Activated naive CD4-positive, alpha-beta T cell treated with anti-CD3 and anti-CD28 coated beads for 36 hours (primary cell): ENCODE measurements at regions of chr9 and their contacts with region 1.

Region 1: DNA sequence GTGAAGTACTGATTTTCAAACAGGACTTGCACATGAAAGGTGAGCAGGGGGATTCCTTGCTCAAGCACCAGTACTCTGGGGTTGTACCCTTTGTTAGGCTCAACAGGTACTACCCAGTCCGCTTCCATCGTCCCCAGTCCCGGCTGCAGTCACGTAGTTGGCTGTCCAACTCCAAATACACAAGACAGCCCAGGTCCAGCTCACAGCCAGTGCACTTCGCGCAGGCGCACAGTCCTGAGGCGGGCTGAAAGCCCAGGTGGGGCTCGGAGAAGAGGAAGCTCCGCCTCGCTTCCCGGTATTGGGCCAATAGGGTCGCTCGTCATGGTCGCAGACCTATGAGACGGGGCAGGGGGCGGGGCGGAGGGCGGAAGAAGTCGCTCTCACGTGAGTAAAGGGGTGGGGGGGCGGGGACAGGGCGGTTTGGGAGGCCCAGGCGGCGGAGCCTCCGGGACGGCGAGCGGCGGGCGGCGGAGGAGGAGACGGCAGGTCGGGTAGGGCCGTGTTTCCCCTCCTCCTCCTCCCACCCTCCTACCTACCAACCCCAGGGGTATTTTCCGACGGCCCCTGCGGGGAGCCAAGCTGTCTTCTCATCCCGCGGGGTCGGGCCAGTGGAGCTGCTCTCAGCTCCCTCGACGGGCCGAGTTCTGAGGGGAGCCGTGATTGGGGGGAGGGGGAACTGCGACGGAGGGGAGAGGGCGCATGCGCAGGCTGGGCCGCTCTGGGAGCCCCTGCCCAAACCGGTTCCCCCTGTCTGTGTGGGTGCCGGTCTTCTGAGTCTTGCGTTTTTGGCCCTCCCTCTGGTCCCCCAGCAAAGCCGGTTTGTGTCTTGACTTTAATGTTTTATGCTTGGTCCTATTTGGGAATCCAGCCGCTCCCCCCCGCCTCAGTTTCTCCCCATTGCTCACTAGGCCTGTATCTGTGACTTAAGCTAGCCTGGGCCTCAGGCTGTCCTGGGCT is at the start of gene RABGAP1:
- DNase-seq: peak; percentile 99
- H3K4me3 Mint-ChIP-seq: peak within 1 kb of the TSS; percentile 96
- H3K27ac Mint-ChIP-seq: peak within 1 kb of the TSS; percentile 83
- H3K4me1 Mint-ChIP-seq: peaks cover 37% of the 10 kb centered on the region
- H3K27me3 Mint-ChIP-seq: no peaks in the 10 kb centered on the region
- total RNA-seq, gene RABGAP1: 19.7 to 21.3 TPM

Region 2: GRCh38 chr9:122912964-122913673 is 27.8 kb before region 1 on chr9 and contains the start of gene ZBTB6:
- CTCF ChIA-PET with region 1: no interaction called
- intact Hi-C with region 1: loop called (anchors 1 kb)
- DNase-seq: peak; percentile 86
- H3K4me3 Mint-ChIP-seq: peak within 1 kb of the TSS; percentile 96
- H3K27ac Mint-ChIP-seq: peak within 1 kb of the TSS; percentile 92
- H3K4me1 Mint-ChIP-seq: peaks cover 26% of the 10 kb centered on the region
- H3K27me3 Mint-ChIP-seq: no peaks in the 10 kb centered on the region
- total RNA-seq, gene ZBTB6: 7.7 to 8.0 TPM

Region 3: DNA sequence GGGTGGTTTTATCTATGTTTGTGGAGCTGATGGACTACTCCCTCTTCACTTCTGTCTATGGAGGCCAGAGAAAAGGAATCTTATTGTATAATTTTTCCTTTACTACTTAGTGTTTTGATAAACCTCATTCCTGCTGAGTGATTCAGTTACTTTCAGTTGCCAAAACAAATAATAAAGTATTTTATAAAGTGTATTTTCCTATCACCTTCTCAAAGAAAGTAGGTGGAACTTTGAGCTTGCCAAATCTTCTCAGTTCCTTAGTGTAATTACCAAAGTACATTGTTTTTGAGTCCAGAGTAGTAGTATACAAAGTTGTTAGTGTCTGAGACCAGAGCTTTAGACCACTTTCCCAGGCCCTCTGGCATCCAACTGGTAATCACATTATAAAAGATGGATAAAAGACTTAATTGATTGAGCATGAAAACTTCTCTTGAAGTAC is 13.4 kb after region 1 on chr9:
- CTCF ChIA-PET with region 1: no interaction called
- intact Hi-C with region 1: no loop called
- DNase-seq: no peak
- H3K4me3 Mint-ChIP-seq: no peak overlapping the region
- H3K27ac Mint-ChIP-seq: no peak overlapping the region
- H3K4me1 Mint-ChIP-seq: peaks cover 19% of the 10 kb centered on the region
- H3K27me3 Mint-ChIP-seq: no peaks in the 10 kb centered on the region

Region 4: DNA sequence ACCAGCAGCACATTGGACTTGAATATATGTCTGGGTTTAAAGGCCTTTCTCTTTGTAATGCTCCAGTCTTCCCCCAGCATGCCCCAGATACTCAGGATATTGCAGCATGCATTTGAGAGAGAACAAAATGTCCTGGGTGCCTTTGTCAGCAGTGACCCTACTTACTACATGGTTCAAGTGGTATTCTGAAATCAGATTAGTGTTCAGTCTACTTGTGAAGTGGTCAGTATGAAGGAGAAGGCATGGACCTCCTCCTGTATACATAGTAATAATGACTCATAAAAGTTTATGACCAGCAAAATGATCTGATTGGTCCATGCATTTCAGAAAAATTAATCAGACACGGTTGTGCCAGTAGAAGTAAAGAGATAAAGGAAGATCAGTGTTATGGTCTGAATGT is 118.0 kb after region 1 on chr9:
- CTCF ChIA-PET with region 1: no interaction called
- intact Hi-C with region 1: no loop called
- DNase-seq: no peak
- H3K4me3 Mint-ChIP-seq: no peak overlapping the region
- H3K27ac Mint-ChIP-seq: no peak overlapping the region
- H3K4me1 Mint-ChIP-seq: no peaks in the 10 kb centered on the region
- H3K27me3 Mint-ChIP-seq: no peaks in the 10 kb centered on the region

Region 5: DNA sequence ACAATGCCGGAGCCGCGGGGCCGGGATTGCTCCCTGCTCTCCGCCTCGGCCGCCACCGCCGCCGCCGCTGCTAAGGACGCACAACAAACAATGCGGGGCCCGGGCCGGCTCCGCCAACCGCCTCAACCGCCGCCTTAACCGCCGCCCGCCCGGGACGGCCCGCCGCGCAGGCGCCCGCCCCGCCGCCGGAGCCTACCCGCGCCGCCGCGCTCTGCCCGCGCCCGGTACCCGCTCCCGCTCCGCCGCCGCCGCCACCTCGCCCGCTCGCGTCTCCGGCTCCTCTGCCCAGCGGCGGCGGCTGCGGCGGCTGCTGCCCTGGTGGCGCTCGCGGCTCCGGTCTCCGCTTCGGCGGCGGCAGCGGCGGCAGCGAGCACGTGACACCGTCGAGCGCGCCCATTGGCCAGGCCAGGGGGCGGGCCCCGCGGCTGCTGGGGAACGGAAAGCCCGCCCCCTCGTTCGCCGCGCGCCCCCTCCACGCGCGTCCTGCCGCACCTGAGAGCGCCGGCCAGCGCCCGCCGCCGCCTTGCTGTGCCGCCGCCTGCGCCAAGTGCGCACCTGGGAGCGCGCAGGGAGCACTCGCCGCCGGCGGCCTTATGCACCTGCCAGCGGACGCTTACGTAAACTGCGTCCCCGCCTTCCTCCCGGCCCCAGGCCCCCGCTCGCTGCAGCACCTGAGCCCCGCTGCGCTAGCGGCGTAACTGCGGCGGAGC is 327.5 kb after region 1 on chr9 and contains the start of gene STRBP:
- CTCF ChIA-PET with region 1: no interaction called
- intact Hi-C with region 1: loop called (anchors 2 kb)
- DNase-seq: peak; percentile 90
- H3K4me3 Mint-ChIP-seq: peak within 1 kb of the TSS; percentile 74
- H3K27ac Mint-ChIP-seq: no peak within 1 kb of the TSS
- H3K4me1 Mint-ChIP-seq: peaks cover 28% of the 10 kb centered on the region
- H3K27me3 Mint-ChIP-seq: no peaks in the 10 kb centered on the region
- total RNA-seq, gene STRBP: 27.6 to 27.8 TPM

Region 6: GRCh38 chr9:123322273-123323195 is 381.7 kb after region 1 on chr9:
- CTCF ChIA-PET with region 1: no interaction called
- intact Hi-C with region 1: loop called (anchors 5 kb)
- DNase-seq: peak; percentile 84
- H3K4me3 Mint-ChIP-seq: peak overlapping the region; percentile 25
- H3K27ac Mint-ChIP-seq: peak overlapping the region; percentile 80
- H3K4me1 Mint-ChIP-seq: peaks cover 31% of the 10 kb centered on the region
- H3K27me3 Mint-ChIP-seq: no peaks in the 10 kb centered on the region